Activated B cell treated with CpG ODN at 0.5 μM for 24 hours (primary cell): ENCODE measurements at regions of chr19 and their contacts with region 1.

Region 1: DNA sequence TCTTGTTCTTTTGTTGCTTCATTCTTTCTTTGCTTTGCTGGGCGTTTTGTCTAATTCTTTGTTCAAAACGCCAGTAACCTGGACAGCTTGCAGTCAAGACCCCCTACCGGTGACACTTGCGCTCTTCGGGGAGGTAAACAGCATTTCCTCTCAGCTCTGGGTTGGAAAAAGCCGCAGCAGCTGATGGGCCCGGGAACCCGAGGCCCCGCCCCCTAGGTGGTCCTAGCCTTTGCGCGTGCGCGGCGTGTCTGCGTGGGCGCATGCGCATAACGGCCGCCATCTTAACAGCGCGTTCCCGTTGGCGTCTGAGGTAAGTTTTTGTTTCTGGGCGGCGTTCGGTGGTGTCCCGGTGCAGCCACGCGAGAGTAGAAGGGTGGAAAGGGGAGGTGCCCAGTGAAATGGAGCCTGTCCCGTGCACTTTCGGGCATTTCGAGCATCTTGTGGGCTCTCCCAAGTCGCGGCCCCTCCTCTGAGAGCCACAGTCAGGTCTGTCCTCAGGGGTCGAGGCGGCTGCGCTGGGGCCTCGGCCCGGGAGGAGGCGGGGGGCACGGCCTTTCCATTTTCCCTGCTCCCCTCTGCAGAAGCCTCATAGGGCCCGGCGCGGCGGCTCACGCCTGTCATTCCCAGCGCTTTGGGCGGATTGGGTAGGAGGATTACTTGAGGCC is at the start of gene ZNF559:
- DNase-seq: peak; percentile 98
- ATAC-seq: peak; percentile 96
- H3K4me3 Mint-ChIP-seq: peak within 1 kb of the TSS; percentile 95
- H3K27ac Mint-ChIP-seq: peak within 1 kb of the TSS; percentile 95
- H3K4me1 Mint-ChIP-seq: peaks cover 20% of the 10 kb centered on the region
- H3K27me3 Mint-ChIP-seq: no peaks in the 10 kb centered on the region
- CTCF ChIP-seq: no peak
- total RNA-seq, gene ZNF559: 22.0 and 22.8 TPM in 2 replicates

Region 2: DNA sequence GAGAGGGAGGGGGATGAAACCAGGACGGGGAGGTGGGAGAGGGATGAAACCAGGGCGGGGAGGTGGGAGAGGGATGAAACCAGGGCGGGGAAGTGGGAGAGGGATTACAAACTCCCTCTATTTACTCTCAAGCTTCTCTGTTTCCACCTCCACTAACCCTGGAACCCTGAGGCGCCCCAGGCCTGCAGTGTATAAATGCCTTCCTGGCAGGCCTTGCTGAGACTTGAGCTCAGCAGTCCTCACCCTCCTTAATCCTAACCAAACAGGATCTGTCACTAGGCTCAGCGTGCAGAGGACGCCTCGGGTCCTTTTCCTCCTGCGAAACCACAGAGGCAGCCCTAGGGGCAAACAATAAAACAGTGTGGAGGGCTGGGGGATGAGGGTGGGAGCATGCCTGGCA is 269.3 kb before region 1 on chr19:
- CTCF ChIA-PET with region 1: no interaction called
- POLR2A ChIA-PET with region 1: no interaction called
- intact Hi-C with region 1: no loop called
- DNase-seq: no peak
- ATAC-seq: no peak
- H3K4me3 Mint-ChIP-seq: no peak overlapping the region
- H3K27ac Mint-ChIP-seq: no peak overlapping the region
- H3K4me1 Mint-ChIP-seq: no peaks in the 10 kb centered on the region
- H3K27me3 Mint-ChIP-seq: no peaks in the 10 kb centered on the region
- CTCF ChIP-seq: no peak

Region 3: DNA sequence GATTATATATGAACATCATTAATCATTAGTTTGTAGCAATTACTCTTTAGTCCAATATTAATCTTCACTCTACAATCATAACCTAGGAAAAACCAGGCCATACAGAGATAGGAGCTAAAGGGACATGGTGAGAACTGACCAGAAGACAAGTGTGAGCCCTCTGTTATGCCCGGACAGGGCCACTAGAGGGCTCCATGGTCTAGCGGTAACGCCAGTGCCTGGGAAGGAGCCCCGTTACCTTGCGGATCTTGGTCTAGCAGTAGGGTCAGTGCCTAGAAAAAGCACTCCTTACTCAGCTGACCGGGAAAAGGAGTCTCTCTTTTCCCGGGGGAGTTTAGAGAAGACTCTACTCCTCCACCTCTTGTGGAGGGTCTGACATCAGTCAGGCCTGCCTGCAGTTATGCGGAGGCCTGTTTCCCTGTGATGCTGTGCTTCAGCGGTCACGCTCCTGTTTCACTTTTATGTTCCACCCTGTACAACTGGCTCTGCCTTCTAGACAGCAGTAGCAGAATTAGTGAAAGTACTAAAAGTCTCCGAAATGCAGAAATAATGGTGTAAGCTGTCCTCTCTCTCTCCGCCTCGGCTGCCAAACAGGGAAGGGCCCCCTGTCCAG is 118.4 kb before region 1 on chr19:
- CTCF ChIA-PET with region 1: no interaction called
- POLR2A ChIA-PET with region 1: no interaction called
- intact Hi-C with region 1: loop called (anchors 10 kb)
- DNase-seq: peak; percentile 54
- ATAC-seq: peak; percentile 66
- H3K4me3 Mint-ChIP-seq: peak overlapping the region; percentile 66
- H3K27ac Mint-ChIP-seq: no peak overlapping the region
- H3K4me1 Mint-ChIP-seq: peaks cover 7% of the 10 kb centered on the region
- H3K27me3 Mint-ChIP-seq: peaks cover 8% of the 10 kb centered on the region
- CTCF ChIP-seq: peak; percentile 72

Region 4: GRCh38 chr19:9309139-9309973 is 14.7 kb before region 1 on chr19 and contains the start of gene ZNF699:
- CTCF ChIA-PET with region 1: interaction called, 4 read pairs
- POLR2A ChIA-PET with region 1: interaction called, 6 read pairs
- intact Hi-C with region 1: loop called (anchors 1 kb)
- DNase-seq: peak; percentile 94
- ATAC-seq: peak; percentile 88
- H3K4me3 Mint-ChIP-seq: peak within 1 kb of the TSS; percentile 96
- H3K27ac Mint-ChIP-seq: peak within 1 kb of the TSS; percentile 98
- H3K4me1 Mint-ChIP-seq: peaks cover 24% of the 10 kb centered on the region
- H3K27me3 Mint-ChIP-seq: no peaks in the 10 kb centered on the region
- CTCF ChIP-seq: no peak
- total RNA-seq, gene ZNF699: 10.3 and 11.7 TPM in 2 replicates

Region 5: GRCh38 chr19:9406798-9407352 is 82.8 kb after region 1 on chr19:
- CTCF ChIA-PET with region 1: no interaction called
- POLR2A ChIA-PET with region 1: interaction called, 5 read pairs
- intact Hi-C with region 1: loop called (anchors 5 kb)
- DNase-seq: peak; percentile 35
- ATAC-seq: peak; percentile 73
- H3K4me3 Mint-ChIP-seq: peak overlapping the region; percentile 88
- H3K27ac Mint-ChIP-seq: peak overlapping the region; percentile 30
- H3K4me1 Mint-ChIP-seq: peaks cover 19% of the 10 kb centered on the region
- H3K27me3 Mint-ChIP-seq: no peaks in the 10 kb centered on the region
- CTCF ChIP-seq: no peak

Region 6: GRCh38 chr19:9538183-9539058 is 214.4 kb after region 1 on chr19 and contains the start of gene ZNF426:
- CTCF ChIA-PET with region 1: no interaction called
- POLR2A ChIA-PET with region 1: no interaction called
- intact Hi-C with region 1: loop called (anchors 1 kb)
- DNase-seq: peak; percentile 79
- ATAC-seq: peak; percentile 92
- H3K4me3 Mint-ChIP-seq: peak within 1 kb of the TSS; percentile 98
- H3K27ac Mint-ChIP-seq: peak within 1 kb of the TSS; percentile 99
- H3K4me1 Mint-ChIP-seq: peaks cover 26% of the 10 kb centered on the region
- H3K27me3 Mint-ChIP-seq: no peaks in the 10 kb centered on the region
- CTCF ChIP-seq: no peak
- total RNA-seq, gene ZNF426: 18.8 and 22.7 TPM in 2 replicates